ENCODE measurements at regions of chr9 and their contacts with region 1.

Region 1: DNA sequence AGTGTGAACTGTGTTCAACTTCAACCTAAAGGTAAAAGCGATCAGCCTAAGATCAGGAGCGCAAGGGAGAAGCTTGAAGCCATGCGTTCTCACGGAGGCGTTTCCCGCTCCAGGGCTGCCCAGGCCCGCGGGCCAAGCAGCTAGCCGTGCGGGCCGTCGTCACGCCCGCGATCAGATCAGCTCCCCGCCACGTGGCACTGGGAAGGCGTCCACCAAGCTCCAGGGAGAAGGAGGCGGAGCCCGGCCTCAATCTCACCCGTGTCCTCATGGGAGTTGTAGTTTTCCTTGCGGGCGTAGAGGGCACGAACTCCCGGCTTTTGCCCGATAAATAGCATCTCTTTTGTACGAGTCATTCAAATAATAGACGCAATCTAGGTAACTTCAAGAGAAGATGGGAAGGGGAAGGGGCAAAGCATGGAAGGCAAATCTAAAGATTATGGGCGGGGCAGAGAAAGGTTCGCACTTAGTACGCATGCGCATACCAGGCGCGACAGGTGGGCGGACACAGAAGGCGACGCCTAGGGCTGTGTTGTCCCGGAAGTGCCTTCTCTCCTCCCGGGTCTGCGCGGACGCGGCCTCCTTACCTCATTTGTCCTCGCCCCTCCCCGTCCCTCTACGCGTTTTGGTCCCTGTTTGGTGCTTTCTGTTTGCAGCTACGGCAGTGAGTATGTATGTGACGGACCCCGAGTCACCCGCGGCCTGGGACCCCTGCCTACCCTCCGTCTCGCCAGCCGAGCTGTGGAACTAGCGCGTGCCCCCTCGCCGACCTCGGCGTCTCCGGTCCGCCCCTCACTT is 40.8 kb upstream of the ZCCHC7 start:
- DNase-seq: peak; percentile 97
- ATAC-seq: peak; percentile 98
- H3K4me3 Mint-ChIP-seq: peak overlapping the region; percentile 94
- H3K27ac Mint-ChIP-seq: peak overlapping the region; percentile 96
- H3K4me1 Mint-ChIP-seq: peaks cover 42% of the 10 kb centered on the region
- H3K27me3 Mint-ChIP-seq: peaks cover 3% of the 10 kb centered on the region

Region 2: GRCh38 chr9:37027582-37028419 is 51.8 kb before region 1 on chr9:
- CTCF ChIA-PET with region 1: interaction called, 3 read pairs
- POLR2A ChIA-PET with region 1: no interaction called
- intact Hi-C with region 1: loop called (anchors 1 to 2 kb)
- DNase-seq: peak; percentile 96
- ATAC-seq: peak; percentile 97
- H3K4me3 Mint-ChIP-seq: peak overlapping the region; percentile 64
- H3K27ac Mint-ChIP-seq: no peak overlapping the region
- H3K4me1 Mint-ChIP-seq: peaks cover 37% of the 10 kb centered on the region
- H3K27me3 Mint-ChIP-seq: peaks cover 80% of the 10 kb centered on the region

Region 3: DNA sequence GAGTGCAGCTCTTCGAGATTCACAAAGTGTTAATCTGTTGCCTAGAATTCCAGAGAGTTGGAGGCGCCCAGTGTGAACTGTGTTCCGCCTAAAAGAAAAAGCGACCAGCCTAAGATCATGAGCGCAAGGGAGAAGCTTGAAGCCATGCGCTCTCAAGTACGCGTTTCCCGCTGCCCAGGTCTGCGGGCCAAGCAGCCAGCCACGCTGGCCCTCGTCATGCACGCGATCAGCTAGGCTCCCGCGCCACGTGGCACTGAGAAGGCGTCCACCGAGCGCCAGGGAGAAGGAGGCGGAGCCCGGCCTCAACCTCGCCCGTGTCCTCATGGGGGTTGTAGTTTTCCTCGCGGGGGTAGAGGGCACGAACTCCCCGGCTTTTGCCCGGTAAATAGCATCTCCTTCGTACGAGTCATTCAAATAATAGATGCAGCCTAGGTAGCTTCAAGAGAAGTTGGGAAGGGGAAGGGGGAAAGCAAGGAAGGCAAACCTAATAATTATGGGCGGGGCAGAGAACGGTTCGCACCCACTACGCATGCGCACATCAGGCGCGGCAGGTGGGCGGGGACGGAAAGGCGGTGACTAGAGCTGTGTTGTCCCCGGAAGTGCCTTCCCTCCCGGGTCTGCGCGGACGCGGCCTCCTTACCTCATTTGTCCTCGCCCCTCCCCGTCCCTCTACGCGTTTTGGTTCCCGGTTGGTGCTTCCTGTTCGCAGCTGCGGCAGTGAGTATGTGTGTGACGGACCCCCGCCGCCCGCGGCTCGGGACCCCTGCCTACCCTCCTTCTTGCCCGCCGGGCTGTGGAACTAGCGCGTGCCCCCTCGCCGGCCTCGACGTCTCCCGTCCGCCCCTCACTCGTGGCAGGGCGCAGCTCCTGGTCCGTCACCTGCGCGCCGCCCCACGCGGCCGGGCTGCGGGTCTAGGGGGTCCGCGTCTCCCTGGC is 40.6 kb after region 1 on chr9 and contains the start of gene ZCCHC7:
- CTCF ChIA-PET with region 1: interaction called, 6 read pairs
- POLR2A ChIA-PET with region 1: interaction called, 9 read pairs
- intact Hi-C with region 1: loop called (anchors 1 kb)
- DNase-seq: peak; percentile 98
- ATAC-seq: peak; percentile 98
- H3K4me3 Mint-ChIP-seq: peak within 1 kb of the TSS; percentile 80
- H3K27ac Mint-ChIP-seq: peak within 1 kb of the TSS; percentile 96
- H3K4me1 Mint-ChIP-seq: peaks cover 31% of the 10 kb centered on the region
- H3K27me3 Mint-ChIP-seq: no peaks in the 10 kb centered on the region
- total RNA-seq, gene ZCCHC7: 29.9 to 50.2 TPM

Region 4: DNA sequence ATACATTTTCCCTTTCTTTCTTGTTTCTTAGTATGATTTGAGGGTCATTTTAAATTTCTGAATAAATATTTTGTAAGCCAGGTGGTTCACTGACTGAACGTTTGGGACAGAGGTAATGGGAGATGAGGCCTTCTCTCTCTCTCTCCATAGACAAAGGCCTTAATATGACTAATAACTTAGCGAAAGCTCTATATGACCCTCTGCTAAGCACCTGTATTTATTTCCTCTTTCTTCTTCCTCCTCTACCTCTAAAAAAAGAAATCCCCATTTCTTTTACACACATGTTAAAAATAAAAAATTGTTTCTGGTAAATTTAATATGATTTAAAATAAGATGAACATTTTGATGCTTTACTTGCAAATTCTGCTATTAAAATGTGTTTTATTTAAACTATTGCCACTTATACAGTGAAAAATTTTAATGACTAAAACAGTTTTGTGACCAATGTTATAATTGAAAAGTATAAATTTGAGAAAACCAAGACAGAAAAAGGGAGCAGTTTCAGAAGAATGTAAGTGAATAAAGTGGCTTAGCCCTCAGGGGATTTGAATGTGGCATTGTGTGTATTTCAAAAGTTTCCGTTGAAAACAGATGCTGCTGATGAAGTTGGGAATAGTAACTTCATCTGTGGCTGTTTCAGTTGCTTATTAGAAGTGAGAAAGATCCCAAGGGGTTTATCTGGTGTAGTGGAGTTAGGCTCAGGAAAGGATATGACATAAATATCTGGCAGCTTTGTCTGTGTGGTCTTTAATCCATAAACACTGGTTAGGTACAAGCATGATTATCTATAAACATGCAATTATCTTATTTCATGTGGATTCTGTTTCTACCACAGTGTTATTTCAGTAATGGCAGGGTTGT is 214.3 kb after region 1 on chr9:
- CTCF ChIA-PET with region 1: interaction called, 5 read pairs
- POLR2A ChIA-PET with region 1: no interaction called
- intact Hi-C with region 1: loop called (anchors 1 to 2 kb)
- DNase-seq: no peak
- ATAC-seq: no peak
- H3K4me3 Mint-ChIP-seq: no peak overlapping the region
- H3K27ac Mint-ChIP-seq: peak overlapping the region; percentile 72
- H3K4me1 Mint-ChIP-seq: peaks cover 79% of the 10 kb centered on the region
- H3K27me3 Mint-ChIP-seq: no peaks in the 10 kb centered on the region

Region 5: GRCh38 chr9:37422289-37423104 is 342.9 kb after region 1 on chr9 and contains the start of gene GRHPR:
- CTCF ChIA-PET with region 1: no interaction called
- POLR2A ChIA-PET with region 1: no interaction called
- intact Hi-C with region 1: loop called in 1 of 2 experiments (anchors 1 kb)
- DNase-seq: peak; percentile 95
- ATAC-seq: peak; percentile 99
- H3K4me3 Mint-ChIP-seq: peak within 1 kb of the TSS; percentile 91
- H3K27ac Mint-ChIP-seq: peak within 1 kb of the TSS; percentile 95
- H3K4me1 Mint-ChIP-seq: peaks cover 25% of the 10 kb centered on the region
- H3K27me3 Mint-ChIP-seq: no peaks in the 10 kb centered on the region
- total RNA-seq, gene GRHPR: 69.1 to 74.4 TPM